ENCODE measurements at regions of chr6 and their contacts with region 1.

Region 1: GRCh38 chr6:57316581-57317059 is 810 bp upstream of the PRIM2 start:
- DNase-seq: peak; percentile 94
- H3K4me3 Mint-ChIP-seq: peak overlapping the region; percentile 95
- H3K27ac Mint-ChIP-seq: peak overlapping the region; percentile 88
- H3K4me1 Mint-ChIP-seq: peaks cover 32% of the 10 kb centered on the region
- H3K27me3 Mint-ChIP-seq: no peaks in the 10 kb centered on the region
- CTCF ChIP-seq: peak; percentile 82

Region 2: GRCh38 chr6:56955171-56956045 is 361.2 kb before region 1 on chr6:
- CTCF ChIA-PET with region 1: interaction called, 13 read pairs
- POLR2A ChIA-PET with region 1: interaction called, 3 read pairs
- intact Hi-C with region 1: loop called (anchors 1 kb)
- DNase-seq: peak; percentile 92
- H3K4me3 Mint-ChIP-seq: peak overlapping the region; percentile 97
- H3K27ac Mint-ChIP-seq: peak overlapping the region; percentile 29
- H3K4me1 Mint-ChIP-seq: peaks cover 13% of the 10 kb centered on the region
- H3K27me3 Mint-ChIP-seq: no peaks in the 10 kb centered on the region
- CTCF ChIP-seq: peak; percentile 77

Region 3: GRCh38 chr6:57089687-57090460 is 226.7 kb before region 1 on chr6 and contains the start of gene ZNF451:
- CTCF ChIA-PET with region 1: interaction called, 8 read pairs
- POLR2A ChIA-PET with region 1: interaction called, 10 read pairs
- intact Hi-C with region 1: no loop called
- DNase-seq: peak; percentile 97
- H3K4me3 Mint-ChIP-seq: peak within 1 kb of the TSS; percentile 70
- H3K27ac Mint-ChIP-seq: peak within 1 kb of the TSS; percentile 71
- H3K4me1 Mint-ChIP-seq: peaks cover 28% of the 10 kb centered on the region
- H3K27me3 Mint-ChIP-seq: no peaks in the 10 kb centered on the region
- CTCF ChIP-seq: no peak
- total RNA-seq, gene ZNF451: 63.0 and 65.7 TPM in 2 replicates

Region 4: GRCh38 chr6:57190140-57190539 is 126.5 kb before region 1 on chr6:
- CTCF ChIA-PET with region 1: interaction called, 54 read pairs
- POLR2A ChIA-PET with region 1: interaction called, 7 read pairs
- intact Hi-C with region 1: no loop called
- DNase-seq: peak; percentile 17
- H3K4me3 Mint-ChIP-seq: no peak overlapping the region
- H3K27ac Mint-ChIP-seq: no peak overlapping the region
- H3K4me1 Mint-ChIP-seq: no peaks in the 10 kb centered on the region
- H3K27me3 Mint-ChIP-seq: no peaks in the 10 kb centered on the region
- CTCF ChIP-seq: no peak

Region 5: GRCh38 chr6:57207141-57207540 is 109.5 kb before region 1 on chr6:
- CTCF ChIA-PET with region 1: no interaction called
- POLR2A ChIA-PET with region 1: no interaction called
- intact Hi-C with region 1: no loop called
- DNase-seq: peak; percentile 47
- H3K4me3 Mint-ChIP-seq: no peak overlapping the region
- H3K27ac Mint-ChIP-seq: no peak overlapping the region
- H3K4me1 Mint-ChIP-seq: peaks cover 4% of the 10 kb centered on the region
- H3K27me3 Mint-ChIP-seq: no peaks in the 10 kb centered on the region
- CTCF ChIP-seq: no peak

Region 6: DNA sequence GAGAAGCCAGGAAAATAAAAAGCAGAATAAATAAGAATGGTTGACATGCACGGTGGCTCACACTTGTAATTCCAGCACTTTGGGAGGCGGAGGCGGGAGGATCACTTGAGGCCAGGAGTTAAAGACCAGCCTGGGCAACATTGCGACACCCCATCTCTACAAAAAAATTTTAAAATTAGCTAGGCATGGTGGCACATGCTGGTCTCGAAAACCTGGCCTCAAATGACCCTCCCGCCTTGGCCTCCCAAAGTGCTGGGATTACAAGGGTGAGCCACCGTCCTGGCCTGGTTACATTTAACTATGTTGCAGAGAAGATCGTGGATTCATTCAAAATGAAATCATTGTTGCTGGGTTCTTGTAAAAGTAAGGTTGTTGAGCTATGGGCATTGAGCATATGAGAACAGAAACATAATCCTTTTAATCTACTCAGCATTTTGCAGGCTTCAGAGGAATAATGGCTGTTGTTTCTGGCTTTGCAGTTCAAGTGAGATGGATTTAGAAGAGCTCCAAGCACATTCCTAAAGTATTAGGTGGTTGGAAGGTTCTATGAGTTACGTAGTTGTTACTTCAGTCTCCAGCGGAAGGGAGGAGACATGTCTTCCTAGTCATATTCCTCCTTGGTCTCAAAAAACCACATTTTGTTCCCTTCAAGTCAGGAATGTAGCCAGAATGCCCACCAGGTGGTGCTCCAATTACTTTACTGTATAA is 48.9 kb before region 1 on chr6:
- CTCF ChIA-PET with region 1: interaction called, 16 read pairs
- POLR2A ChIA-PET with region 1: interaction called, 17 read pairs
- intact Hi-C with region 1: loop called (anchors 1 kb)
- DNase-seq: peak; percentile 91
- H3K4me3 Mint-ChIP-seq: peak overlapping the region; percentile 45
- H3K27ac Mint-ChIP-seq: peak overlapping the region; percentile 66
- H3K4me1 Mint-ChIP-seq: peaks cover 16% of the 10 kb centered on the region
- H3K27me3 Mint-ChIP-seq: no peaks in the 10 kb centered on the region
- CTCF ChIP-seq: peak; percentile 49

Region 7: DNA sequence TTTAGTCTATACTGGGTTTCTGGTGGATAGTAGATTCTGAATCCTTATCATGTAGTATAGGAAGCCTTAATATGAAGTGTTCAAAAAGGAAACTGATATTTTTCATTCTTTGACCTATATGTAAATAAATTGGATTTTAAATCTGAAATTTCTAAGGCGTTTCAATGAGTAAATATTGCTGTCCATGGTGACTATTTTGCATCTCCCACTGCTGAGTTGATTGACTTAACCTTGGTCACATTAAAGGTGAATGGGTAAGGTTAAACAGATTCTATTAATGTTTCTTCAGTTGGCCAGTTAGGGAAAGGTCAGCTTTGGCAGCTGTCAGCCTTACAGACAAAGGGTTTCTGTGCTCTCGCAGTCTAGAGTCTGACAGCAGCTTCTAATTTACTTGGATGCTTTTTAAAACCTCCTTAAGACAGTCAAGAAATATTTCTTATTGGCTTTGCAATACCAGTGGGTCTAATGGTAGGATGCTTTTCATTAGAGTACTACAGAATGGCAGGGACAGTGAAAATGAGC is 25.6 kb after region 1 on chr6:
- CTCF ChIA-PET with region 1: no interaction called
- POLR2A ChIA-PET with region 1: no interaction called
- intact Hi-C with region 1: no loop called
- DNase-seq: no peak
- H3K4me3 Mint-ChIP-seq: no peak overlapping the region
- H3K27ac Mint-ChIP-seq: no peak overlapping the region
- H3K4me1 Mint-ChIP-seq: peaks cover 5% of the 10 kb centered on the region
- H3K27me3 Mint-ChIP-seq: no peaks in the 10 kb centered on the region
- CTCF ChIP-seq: no peak